Activated CD4-positive, alpha-beta T cell treated with anti-CD3 and anti-CD28 coated beads for 36 hours (primary cell): ENCODE measurements at regions of chr6 and their contacts with region 1.

Region 1: GRCh38 chr6:109095027-109095834 is at the start of gene CEP57L1:
- DNase-seq: peak; percentile 97
- ATAC-seq: peak; percentile 79
- H3K4me3 Mint-ChIP-seq: peak within 1 kb of the TSS; percentile 91
- H3K27ac Mint-ChIP-seq: peak within 1 kb of the TSS; percentile 99
- H3K4me1 Mint-ChIP-seq: peaks cover 46% of the 10 kb centered on the region
- H3K27me3 Mint-ChIP-seq: no peaks in the 10 kb centered on the region
- total RNA-seq, gene CEP57L1: 23.8 to 36.9 TPM

Region 2: DNA sequence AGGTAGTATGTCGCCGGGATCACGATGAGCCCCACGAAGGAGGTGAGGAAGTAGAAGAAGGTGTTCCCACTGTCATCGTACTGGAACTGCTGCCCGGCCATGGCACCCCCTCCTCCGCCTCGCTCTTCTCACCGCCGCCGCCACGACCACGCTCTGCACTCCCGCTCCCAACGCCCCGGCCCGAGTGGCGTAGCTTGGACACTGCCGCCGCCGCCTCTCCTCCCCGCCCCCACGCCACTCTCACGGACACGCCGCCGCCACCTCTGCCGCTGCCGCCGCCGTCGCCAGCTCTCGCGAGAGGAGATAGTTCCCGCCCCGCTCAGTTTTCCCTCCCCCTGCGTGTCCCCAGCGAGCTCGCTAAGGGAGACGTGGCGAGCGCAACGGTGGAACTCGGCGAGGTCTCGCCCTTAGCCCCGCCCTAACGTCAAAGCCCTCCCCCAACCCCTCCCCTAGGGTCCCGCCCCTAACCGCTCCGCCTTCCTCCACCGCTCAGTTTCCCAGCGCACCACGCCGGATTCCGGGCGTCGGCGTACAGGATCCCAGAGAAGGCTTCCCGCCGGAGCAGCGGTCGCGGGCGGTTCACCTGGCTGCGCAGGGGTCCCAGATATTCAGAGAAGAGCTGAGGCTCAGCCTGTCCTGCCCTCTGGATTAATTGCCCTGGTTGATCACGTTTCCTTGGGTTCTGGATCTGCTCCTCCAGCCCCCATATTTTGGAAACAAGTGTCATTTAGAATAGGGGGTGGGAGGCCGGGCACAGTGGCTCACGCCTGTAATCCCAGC is 1137.1 kb before region 1 on chr6 and contains the start of gene SEC63:
- CTCF ChIA-PET with region 1: no interaction called
- POLR2A ChIA-PET with region 1: no interaction called
- intact Hi-C with region 1: loop called in 1 of 2 experiments (anchors 1 kb)
- DNase-seq: peak; percentile 98
- ATAC-seq: peak; percentile 98
- H3K4me3 Mint-ChIP-seq: peak within 1 kb of the TSS; percentile 100
- H3K27ac Mint-ChIP-seq: peak within 1 kb of the TSS; percentile 99
- H3K4me1 Mint-ChIP-seq: peaks cover 36% of the 10 kb centered on the region
- H3K27me3 Mint-ChIP-seq: peaks cover 2% of the 10 kb centered on the region
- total RNA-seq, gene SEC63: 98.7 to 100 TPM

Region 3: DNA sequence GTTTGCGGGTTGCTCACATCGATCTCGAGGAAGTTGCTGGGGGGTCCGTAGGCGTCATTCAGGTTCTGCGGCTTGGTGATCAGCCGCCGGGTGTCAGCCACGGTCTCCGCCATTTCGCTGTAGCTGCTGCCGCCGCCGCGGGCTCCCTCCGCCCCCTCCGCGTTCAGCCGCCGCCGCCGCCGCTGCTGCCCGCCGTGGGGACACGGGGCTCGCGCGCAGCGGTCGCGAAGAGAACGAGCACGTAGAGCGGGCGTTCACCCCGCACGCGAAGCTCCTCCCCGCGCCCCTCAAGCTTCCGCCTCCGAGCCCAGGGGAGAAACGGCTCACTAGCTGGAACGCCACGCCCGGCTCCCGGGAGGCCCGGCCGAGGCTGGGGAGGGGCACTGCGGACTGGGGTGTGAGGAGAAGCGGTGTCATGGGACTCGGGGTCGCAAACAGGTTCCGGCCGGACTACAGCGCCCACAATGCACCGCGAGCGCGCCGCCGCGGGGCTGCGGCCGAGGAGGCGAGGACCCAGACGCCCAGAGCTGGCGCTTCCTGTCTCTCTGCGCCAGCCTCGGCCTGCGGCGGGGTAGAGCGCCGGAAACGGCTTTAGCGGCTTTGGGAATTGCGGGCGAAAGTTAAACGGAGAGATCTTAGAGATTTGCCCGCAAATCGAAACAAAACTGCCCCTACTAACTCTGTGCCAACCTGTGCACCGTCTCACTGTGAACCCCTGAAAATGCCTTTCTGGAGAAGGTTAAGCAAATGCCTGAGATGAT is 834.2 kb before region 1 on chr6 and contains the start of gene SNX3:
- CTCF ChIA-PET with region 1: no interaction called
- POLR2A ChIA-PET with region 1: no interaction called
- intact Hi-C with region 1: loop called (anchors 1 kb)
- DNase-seq: peak; percentile 94
- ATAC-seq: peak; percentile 93
- H3K4me3 Mint-ChIP-seq: peak within 1 kb of the TSS; percentile 80
- H3K27ac Mint-ChIP-seq: peak within 1 kb of the TSS; percentile 89
- H3K4me1 Mint-ChIP-seq: peaks cover 23% of the 10 kb centered on the region
- H3K27me3 Mint-ChIP-seq: no peaks in the 10 kb centered on the region
- total RNA-seq, gene SNX3: 77.1 to 112 TPM

Region 4: GRCh38 chr6:108874470-108875160 is 220.6 kb before region 1 on chr6:
- CTCF ChIA-PET with region 1: no interaction called
- POLR2A ChIA-PET with region 1: no interaction called
- intact Hi-C with region 1: loop called in 1 of 2 experiments (anchors 1 kb)
- DNase-seq: peak; percentile 79
- ATAC-seq: peak; percentile 87
- H3K4me3 Mint-ChIP-seq: peak overlapping the region; percentile 51
- H3K27ac Mint-ChIP-seq: peak overlapping the region; percentile 89
- H3K4me1 Mint-ChIP-seq: peaks cover 41% of the 10 kb centered on the region
- H3K27me3 Mint-ChIP-seq: peaks cover 8% of the 10 kb centered on the region

Region 5: GRCh38 chr6:109117346-109118035 is 22.3 kb after region 1 on chr6:
- CTCF ChIA-PET with region 1: no interaction called
- POLR2A ChIA-PET with region 1: no interaction called
- intact Hi-C with region 1: no loop called
- DNase-seq: no peak
- ATAC-seq: no peak
- H3K4me3 Mint-ChIP-seq: no peak overlapping the region
- H3K27ac Mint-ChIP-seq: no peak overlapping the region
- H3K4me1 Mint-ChIP-seq: peaks cover 22% of the 10 kb centered on the region
- H3K27me3 Mint-ChIP-seq: no peaks in the 10 kb centered on the region

Region 6: DNA sequence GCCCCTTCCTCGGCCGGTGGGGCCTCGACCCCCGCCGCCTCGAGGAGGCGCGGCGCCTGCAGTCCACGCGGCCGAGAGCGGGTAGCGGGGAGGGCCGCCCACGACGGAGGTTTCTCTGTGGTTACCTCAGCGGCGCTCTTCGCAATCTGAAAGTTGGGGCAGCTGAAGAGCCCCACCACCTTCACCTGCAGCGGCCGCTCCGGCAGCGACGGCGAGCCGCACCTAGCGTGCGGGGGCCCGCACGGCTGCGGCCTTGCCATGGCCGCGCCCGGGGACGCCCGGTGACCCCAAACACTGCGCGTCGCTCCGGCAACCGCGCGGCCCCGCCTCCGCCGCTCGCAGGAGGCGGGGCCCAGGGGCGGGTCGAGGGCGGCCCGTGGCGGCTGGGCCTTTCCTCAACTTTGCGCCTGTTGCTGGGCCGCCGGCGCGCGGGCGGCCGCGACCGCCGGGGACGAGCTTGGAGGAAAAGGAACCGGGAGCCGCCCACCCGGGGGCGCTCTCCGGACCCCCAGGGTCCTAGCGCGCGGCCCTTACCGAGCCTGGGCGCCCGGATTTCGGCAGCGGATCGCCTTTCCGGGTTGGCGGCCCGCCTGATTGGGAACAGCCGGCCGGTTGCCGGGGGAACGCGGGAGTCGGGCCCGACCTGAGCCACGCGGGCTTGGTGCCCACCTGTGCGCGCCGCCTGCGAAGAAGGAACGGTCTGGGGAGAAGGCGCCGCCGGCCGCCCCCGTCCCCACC is 345.3 kb after region 1 on chr6 and contains the starts of genes PPIL6 and SMPD2:
- CTCF ChIA-PET with region 1: no interaction called
- POLR2A ChIA-PET with region 1: interaction called, 5 read pairs
- intact Hi-C with region 1: loop called in 1 of 2 experiments (anchors 1 kb)
- DNase-seq: peak; percentile 86
- ATAC-seq: peak; percentile 85
- H3K4me3 Mint-ChIP-seq: peak within 1 kb of the TSS; percentile 89
- H3K27ac Mint-ChIP-seq: peak within 1 kb of the TSS; percentile 85
- H3K4me1 Mint-ChIP-seq: peaks cover 18% of the 10 kb centered on the region
- H3K27me3 Mint-ChIP-seq: no peaks in the 10 kb centered on the region
- total RNA-seq, gene PPIL6: 0.09 TPM in 1 of 2 experiments, not detected in the other
- total RNA-seq, gene SMPD2: 7.5 to 9.5 TPM

Region 7: GRCh38 chr6:109690737-109691621 is 595.7 kb after region 1 on chr6 and contains the starts of genes AK9 and FIG4:
- CTCF ChIA-PET with region 1: no interaction called
- POLR2A ChIA-PET with region 1: interaction called, 7 read pairs
- intact Hi-C with region 1: loop called in 1 of 2 experiments (anchors 1 kb)
- DNase-seq: peak; percentile 95
- ATAC-seq: peak; percentile 94
- H3K4me3 Mint-ChIP-seq: peak within 1 kb of the TSS; percentile 94
- H3K27ac Mint-ChIP-seq: peak within 1 kb of the TSS; percentile 92
- H3K4me1 Mint-ChIP-seq: peaks cover 38% of the 10 kb centered on the region
- H3K27me3 Mint-ChIP-seq: no peaks in the 10 kb centered on the region
- total RNA-seq, gene AK9: 3.5 to 5.2 TPM
- total RNA-seq, gene FIG4: 14.4 to 17.5 TPM